Caco-2 (cell line): ENCODE measurements at regions of chrX and their contacts with region 1.

Region 1: GRCh38 chrX:13734278-13735172 is at the starts of genes OFD1 and TRAPPC2:
- DNase-seq: peak; percentile 92 to 94
- H3K4me3 ChIP-seq: peak within 1 kb of the TSS; percentile 62
- H3K4me3 Mint-ChIP-seq: peak within 1 kb of the TSS; percentile 95
- H3K27ac Mint-ChIP-seq: peak within 1 kb of the TSS; percentile 98
- H3K4me1 ChIP-seq: no peaks in the 10 kb centered on the region
- H3K4me1 Mint-ChIP-seq: peaks cover 20% of the 10 kb centered on the region
- H3K27me3 ChIP-seq: no peaks in the 10 kb centered on the region
- H3K27me3 Mint-ChIP-seq: no peaks in the 10 kb centered on the region
- CTCF ChIP-seq: no peak
- total RNA-seq, gene OFD1: 33.9 and 34.0 TPM in 2 replicates
- total RNA-seq, gene TRAPPC2: 19.3 and 19.4 TPM in 2 replicates

Region 2: DNA sequence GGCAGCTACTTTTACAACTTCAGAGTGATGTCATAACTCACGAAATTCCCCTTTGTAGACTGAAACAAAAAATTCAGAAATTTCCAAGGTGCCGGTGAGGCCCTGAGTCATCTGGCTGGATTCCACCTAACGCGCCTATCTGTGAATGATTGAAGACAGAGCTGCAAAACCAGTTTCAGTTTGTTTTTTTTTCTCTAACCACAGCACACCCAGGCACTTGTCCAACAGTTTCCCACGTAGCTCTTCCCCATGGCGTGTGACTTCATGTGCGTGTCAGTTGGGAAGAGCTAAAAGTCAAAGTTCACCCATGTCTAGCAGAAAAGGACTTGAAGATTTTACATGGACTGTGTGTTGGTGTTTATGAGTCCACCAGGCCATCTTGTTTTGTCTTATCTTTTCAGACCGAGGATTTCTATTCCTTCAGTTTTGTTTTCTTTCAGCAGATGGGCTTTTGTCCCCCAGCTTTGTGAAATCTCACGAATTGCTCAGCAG is 65.2 kb before region 1 on chrX:
- CTCF ChIA-PET with region 1: no interaction called
- POLR2A ChIA-PET with region 1: interaction called, 13 read pairs
- intact Hi-C with region 1: loop called (anchors 5 kb)
- DNase-seq: peak; percentile 82 to 86
- H3K4me3 ChIP-seq: no peak overlapping the region
- H3K4me3 Mint-ChIP-seq: peak overlapping the region; percentile 55
- H3K27ac Mint-ChIP-seq: peak overlapping the region; percentile 85
- H3K4me1 ChIP-seq: peaks cover 27% of the 10 kb centered on the region
- H3K4me1 Mint-ChIP-seq: peaks cover 12% of the 10 kb centered on the region
- H3K27me3 ChIP-seq: no peaks in the 10 kb centered on the region
- H3K27me3 Mint-ChIP-seq: no peaks in the 10 kb centered on the region
- CTCF ChIP-seq: no peak

Region 3: GRCh38 chrX:13711141-13711540 is 23.4 kb before region 1 on chrX:
- CTCF ChIA-PET with region 1: no interaction called
- POLR2A ChIA-PET with region 1: no interaction called
- intact Hi-C with region 1: no loop called
- DNase-seq: no peak
- H3K4me3 ChIP-seq: no peak overlapping the region
- H3K4me3 Mint-ChIP-seq: no peak overlapping the region
- H3K27ac Mint-ChIP-seq: no peak overlapping the region
- H3K4me1 ChIP-seq: no peaks in the 10 kb centered on the region
- H3K4me1 Mint-ChIP-seq: no peaks in the 10 kb centered on the region
- H3K27me3 ChIP-seq: no peaks in the 10 kb centered on the region
- H3K27me3 Mint-ChIP-seq: no peaks in the 10 kb centered on the region
- CTCF ChIP-seq: no peak

Region 4: DNA sequence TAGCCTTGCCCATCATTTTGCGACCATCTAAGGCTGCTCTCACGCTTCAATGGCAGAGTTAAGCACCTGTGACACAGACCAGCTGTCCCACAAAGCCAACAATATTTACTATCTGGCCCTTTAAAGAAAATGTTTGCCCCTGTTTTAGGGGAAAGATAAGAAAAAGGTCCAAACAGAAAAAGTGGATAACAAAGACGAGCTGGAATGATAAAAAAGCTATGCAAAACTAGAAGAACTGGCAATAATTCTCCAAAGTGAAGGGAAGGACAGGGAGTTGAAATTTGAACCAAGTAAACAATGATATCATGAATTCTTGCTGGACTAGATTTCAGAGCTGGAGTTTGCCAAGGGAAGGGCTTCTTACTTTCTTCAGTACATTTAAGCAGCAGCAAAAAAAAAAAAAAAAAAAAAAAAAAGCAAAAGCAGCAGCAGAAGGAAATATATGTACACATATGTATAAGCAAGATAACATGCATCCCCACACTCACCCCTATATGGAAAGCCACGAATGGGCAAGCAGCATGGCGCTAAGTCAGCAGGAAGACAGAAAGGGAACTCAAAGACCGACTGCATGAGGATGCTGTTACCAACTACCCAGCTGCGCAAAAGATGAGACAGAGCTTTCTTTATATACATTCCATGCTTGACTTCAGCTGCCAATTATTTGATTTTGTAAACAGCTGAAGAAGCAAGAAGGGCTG is 12.6 kb before region 1 on chrX:
- CTCF ChIA-PET with region 1: no interaction called
- POLR2A ChIA-PET with region 1: interaction called, 43 read pairs
- intact Hi-C with region 1: no loop called
- DNase-seq: peak in 1 of 2 experiments; percentile 43
- H3K4me3 ChIP-seq: no peak overlapping the region
- H3K4me3 Mint-ChIP-seq: peak overlapping the region; percentile 56
- H3K27ac Mint-ChIP-seq: peak overlapping the region; percentile 45
- H3K4me1 ChIP-seq: peaks cover 6% of the 10 kb centered on the region; the same call in 1 of the 2 replicates
- H3K4me1 Mint-ChIP-seq: peaks cover 15% of the 10 kb centered on the region
- H3K27me3 ChIP-seq: no peaks in the 10 kb centered on the region
- H3K27me3 Mint-ChIP-seq: no peaks in the 10 kb centered on the region
- CTCF ChIP-seq: no peak